ENCODE measurements at regions of chr10 and their contacts with region 1.

Region 1: GRCh38 chr10:131885391-131886161 is 15.2 kb upstream of the PPP2R2D start:
- DNase-seq: peak; percentile 88

Region 2: DNA sequence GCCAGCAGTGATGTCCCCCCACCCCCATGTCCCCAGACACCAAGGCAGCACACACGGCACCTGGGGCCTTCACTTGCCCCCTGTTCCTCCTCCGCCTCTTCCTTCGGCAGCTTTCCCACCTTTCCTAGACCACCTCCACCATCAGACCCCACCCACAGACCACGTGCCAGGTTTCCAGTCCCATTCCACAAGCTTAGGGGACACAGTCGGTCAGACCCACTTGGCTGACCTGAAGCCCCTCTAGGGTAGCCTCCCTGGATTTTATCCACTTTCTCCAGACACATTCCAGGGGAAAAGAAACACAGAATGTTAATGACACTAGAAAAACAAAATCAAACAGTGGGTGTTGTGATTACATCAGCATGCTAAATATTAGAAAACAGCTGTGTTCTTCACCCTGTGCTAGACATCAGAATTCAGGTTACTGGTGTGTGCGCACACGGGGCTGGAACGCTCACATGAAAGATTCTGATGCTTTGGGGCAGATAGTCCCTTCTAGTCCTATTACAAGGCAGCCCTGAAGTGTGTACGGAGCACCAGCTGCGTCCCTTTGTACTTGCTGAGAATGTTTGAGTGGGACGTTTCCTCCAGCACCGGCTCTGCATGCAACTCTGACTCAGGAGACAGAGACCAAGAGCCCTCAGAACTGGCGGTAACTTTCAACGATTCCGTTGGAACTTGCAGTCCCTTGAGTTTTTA is 60.3 kb before region 1 on chr10:
- intact Hi-C with region 1: no loop called
- DNase-seq: peak; percentile 46

Region 3: GRCh38 chr10:131943021-131943814 is 57.6 kb after region 1 on chr10:
- intact Hi-C with region 1: loop called (anchors 5 kb)
- DNase-seq: peak; percentile 75

Region 4: DNA sequence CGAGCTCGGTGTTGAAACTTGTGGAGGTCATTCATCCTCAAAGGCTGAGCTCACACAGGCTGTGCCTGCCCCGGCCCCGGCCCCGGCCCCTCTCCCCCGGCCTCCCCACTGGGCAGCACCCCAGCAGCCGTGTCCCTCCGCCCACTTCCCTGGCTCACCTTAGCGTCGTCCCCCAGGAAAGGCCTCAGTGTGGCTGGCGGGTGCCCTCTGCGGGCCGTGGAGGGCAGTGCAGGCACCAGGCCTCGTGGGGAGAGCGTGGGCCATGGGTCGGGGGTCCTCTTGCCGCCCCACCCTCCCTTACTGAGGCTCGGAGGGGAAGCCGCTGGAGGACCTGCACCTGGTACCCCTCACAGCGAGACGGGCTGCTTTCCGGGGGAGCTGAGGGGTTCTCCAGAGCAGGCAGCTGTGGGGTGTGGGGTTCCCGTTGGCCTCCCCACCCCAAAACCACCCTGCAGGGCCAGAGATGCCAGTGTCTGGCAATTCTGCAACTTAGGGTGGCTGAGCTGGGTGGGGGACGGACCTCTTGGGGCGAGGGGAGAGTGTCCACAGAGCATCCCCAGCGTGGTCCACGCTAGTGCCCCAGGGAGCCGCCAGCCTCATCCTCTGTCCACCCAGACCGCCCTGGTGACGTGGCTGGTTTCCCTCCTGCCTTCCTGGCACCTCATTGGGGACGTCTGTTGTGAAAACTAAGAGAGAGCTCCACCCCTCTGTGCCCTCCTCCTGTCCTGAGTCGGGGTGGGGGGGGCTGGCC is 257.0 kb after region 1 on chr10:
- intact Hi-C with region 1: loop called (anchors 5 kb)
- DNase-seq: peak; percentile 74